GM12878 (cell line): ENCODE measurements at regions of chr1 and their contacts with region 1.

Region 1: GRCh38 chr1:89358287-89358893 is 5.5 kb upstream of the GBP6 start:
- DNase-seq: peak; percentile 27
- ATAC-seq: peak; percentile 94
- H3K4me3 ChIP-seq: no peak overlapping the region
- H3K27ac ChIP-seq: no peak overlapping the region
- H3K4me1 ChIP-seq: peaks cover 5% of the 10 kb centered on the region
- H3K27me3 ChIP-seq: no peaks in the 10 kb centered on the region
- CTCF ChIP-seq: peak; percentile 69 to 84 (median 77); a peak in 5 of 6 replicates
- EP300 ChIP-seq: no peak
- POLR2A ChIP-seq: no peak
- RAD21 ChIP-seq: peak; percentile 97

Region 2: DNA sequence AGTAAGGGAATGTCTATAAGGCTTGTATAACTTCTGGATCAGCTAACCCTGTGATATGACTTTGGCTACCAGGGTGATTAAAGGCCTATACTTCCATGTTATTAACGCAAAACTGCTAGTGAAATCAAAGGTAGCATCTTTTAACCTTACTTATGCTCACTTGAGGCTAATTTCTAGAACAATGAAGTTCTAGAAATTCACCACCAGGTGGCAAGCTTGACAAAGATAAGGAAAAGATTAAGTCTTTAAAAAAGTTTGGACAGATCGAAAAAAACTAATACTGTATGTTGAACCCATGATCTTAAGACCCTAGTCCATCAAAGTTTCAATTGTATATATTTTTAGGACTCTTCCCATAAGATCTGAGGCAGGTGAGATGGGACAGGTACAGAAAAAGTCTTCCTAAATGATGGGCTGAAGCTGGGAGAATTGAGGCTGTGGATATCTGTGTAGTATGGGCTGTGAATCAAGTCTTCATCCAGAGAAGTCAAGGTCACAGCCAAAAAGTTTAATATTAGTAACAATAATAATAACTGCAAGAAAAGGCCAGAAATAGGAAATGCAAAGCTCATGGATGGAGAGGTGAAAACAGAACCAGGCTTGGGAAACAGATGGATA is 384.8 kb before region 1 on chr1:
- CTCF ChIA-PET with region 1: interaction called, 10 read pairs
- POLR2A ChIA-PET with region 1: no interaction called
- RAD21 ChIA-PET with region 1: interaction called, 3 read pairs
- SMC1A ChIA-PET with region 1: interaction called, 6 read pairs
- in situ Hi-C with region 1: no loop called
- intact Hi-C with region 1: no loop called
- DNase-seq: no peak
- ATAC-seq: peak; percentile 74
- H3K4me3 ChIP-seq: no peak overlapping the region
- H3K27ac ChIP-seq: no peak overlapping the region
- H3K4me1 ChIP-seq: peaks cover 4% of the 10 kb centered on the region
- H3K27me3 ChIP-seq: no peaks in the 10 kb centered on the region
- CTCF ChIP-seq: peak; percentile 39 to 63 (median 52); a peak in 5 of 6 replicates
- EP300 ChIP-seq: no peak
- POLR2A ChIP-seq: no peak
- RAD21 ChIP-seq: peak; percentile 62

Region 3: DNA sequence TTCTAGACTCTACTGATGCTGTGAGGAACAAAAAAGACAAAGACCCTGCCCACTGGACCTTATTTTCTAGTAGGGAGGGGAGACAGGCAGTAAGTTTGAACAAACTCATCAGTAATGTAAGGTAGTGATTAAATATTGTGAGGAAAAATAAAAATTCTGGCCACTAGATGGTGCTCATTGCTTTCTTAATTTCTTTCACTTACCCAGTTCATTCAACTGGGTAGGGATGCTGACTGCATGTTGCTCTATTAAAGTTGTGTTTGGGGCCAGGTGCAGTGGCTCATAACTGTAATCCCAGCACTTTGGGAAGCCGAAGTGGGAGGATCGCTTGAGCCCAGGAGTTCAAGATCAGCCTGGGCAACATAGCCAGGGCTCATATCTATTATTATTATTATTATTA is 359.7 kb before region 1 on chr1:
- CTCF ChIA-PET with region 1: interaction called, 98 read pairs
- POLR2A ChIA-PET with region 1: interaction called, 3 read pairs
- RAD21 ChIA-PET with region 1: interaction called, 26 read pairs
- SMC1A ChIA-PET with region 1: interaction called, 14 read pairs
- in situ Hi-C with region 1: loop called (anchors 5 kb)
- intact Hi-C with region 1: loop called (anchors 1 kb)
- DNase-seq: no peak
- ATAC-seq: peak; percentile 98
- H3K4me3 ChIP-seq: no peak overlapping the region
- H3K27ac ChIP-seq: no peak overlapping the region
- H3K4me1 ChIP-seq: peaks cover under 1% of the 10 kb centered on the region
- H3K27me3 ChIP-seq: no peaks in the 10 kb centered on the region
- CTCF ChIP-seq: peak; percentile 24 to 64 (median 28); a peak in 4 of 6 replicates
- EP300 ChIP-seq: no peak
- POLR2A ChIP-seq: no peak
- RAD21 ChIP-seq: peak; percentile 76

Region 4: GRCh38 chr1:89198491-89199072 is 159.8 kb before region 1 on chr1 and contains the start of gene GBP4:
- CTCF ChIA-PET with region 1: interaction called, 5 read pairs
- POLR2A ChIA-PET with region 1: no interaction called
- RAD21 ChIA-PET with region 1: interaction called, 4 read pairs
- SMC1A ChIA-PET with region 1: interaction called, 12 read pairs
- in situ Hi-C with region 1: no loop called
- intact Hi-C with region 1: loop called (anchors 2 kb)
- DNase-seq: peak; percentile 69
- ATAC-seq: peak; percentile 59
- H3K4me3 ChIP-seq: peak within 1 kb of the TSS; percentile 66
- H3K27ac ChIP-seq: peak within 1 kb of the TSS; percentile 73
- H3K4me1 ChIP-seq: peaks cover 13% of the 10 kb centered on the region
- H3K27me3 ChIP-seq: no peaks in the 10 kb centered on the region
- CTCF ChIP-seq: 0 out of 6 replicates have a peak, but pooled peaks of 1 of the 3 experiments have one; percentile 8
- EP300 ChIP-seq: peak; percentile 57 to 61; a peak in 2 of 4 replicates
- POLR2A ChIP-seq: no peak
- RAD21 ChIP-seq: no peak
- polyA plus RNA-seq, gene GBP4: 2.4 to 2.5 TPM

Region 5: DNA sequence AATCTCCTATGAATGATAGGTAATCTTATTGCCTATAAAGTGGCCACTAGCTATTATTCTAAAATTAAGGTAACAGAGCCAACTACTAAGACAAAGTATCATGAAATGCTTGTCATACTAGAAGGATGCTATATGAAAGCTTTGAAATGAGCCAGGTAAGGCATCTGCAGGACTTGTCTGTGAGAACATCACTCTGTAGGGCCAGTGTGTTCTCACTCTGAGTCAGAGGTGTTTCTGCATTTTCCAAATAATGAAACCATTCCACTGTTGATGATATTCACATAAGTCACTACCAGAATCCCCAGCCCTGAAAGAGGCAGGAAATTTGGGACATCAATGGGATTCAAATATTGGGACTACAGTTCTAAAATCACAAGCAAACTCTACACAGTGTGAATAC is 59.9 kb before region 1 on chr1:
- CTCF ChIA-PET with region 1: no interaction called
- POLR2A ChIA-PET with region 1: no interaction called
- RAD21 ChIA-PET with region 1: no interaction called
- SMC1A ChIA-PET with region 1: no interaction called
- in situ Hi-C with region 1: no loop called
- intact Hi-C with region 1: loop called (anchors 5 kb)
- DNase-seq: no peak
- ATAC-seq: peak; percentile 33; the same call in 2 of the 3 replicates
- H3K4me3 ChIP-seq: no peak overlapping the region
- H3K27ac ChIP-seq: no peak overlapping the region
- H3K4me1 ChIP-seq: peaks cover 5% of the 10 kb centered on the region; the same call in 1 of the 2 replicates
- H3K27me3 ChIP-seq: no peaks in the 10 kb centered on the region
- CTCF ChIP-seq: no peak
- EP300 ChIP-seq: no peak
- POLR2A ChIP-seq: no peak
- RAD21 ChIP-seq: no peak

Region 6: DNA sequence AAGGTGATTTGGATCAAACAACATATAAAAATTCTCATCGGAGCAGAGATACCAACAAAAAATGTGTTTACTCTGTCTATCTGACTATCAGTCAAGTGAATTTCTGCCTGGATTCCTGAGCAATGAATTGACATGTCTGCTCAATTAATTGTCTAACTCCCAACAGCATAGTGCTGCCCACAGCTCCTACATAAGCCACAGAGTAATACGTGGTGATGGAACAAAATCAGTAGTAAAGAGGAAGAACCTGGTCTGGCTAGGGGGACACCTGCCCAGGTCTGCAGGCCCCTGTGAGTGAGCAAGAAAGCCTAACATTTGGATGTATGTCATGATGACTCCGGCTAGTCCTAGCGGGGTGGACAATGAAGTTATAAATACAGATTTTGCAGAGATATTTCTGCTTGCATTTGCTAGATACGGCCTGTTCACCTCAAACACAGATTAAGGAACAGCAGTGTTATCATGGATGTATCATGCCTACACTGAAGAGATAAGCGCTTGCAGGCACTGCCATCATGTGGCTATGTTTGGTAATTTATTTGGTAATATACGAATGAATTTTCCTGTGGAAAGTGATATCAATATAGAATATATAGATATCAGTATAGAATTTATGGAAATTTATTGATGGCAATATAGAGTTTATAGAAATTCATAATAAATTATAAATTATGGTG is 96.6 kb after region 1 on chr1:
- CTCF ChIA-PET with region 1: interaction called, 5 read pairs
- POLR2A ChIA-PET with region 1: no interaction called
- RAD21 ChIA-PET with region 1: interaction called, 5 read pairs
- SMC1A ChIA-PET with region 1: interaction called, 7 read pairs
- in situ Hi-C with region 1: no loop called
- intact Hi-C with region 1: loop called (anchors 1 kb)
- DNase-seq: no peak
- ATAC-seq: peak; percentile 86
- H3K4me3 ChIP-seq: no peak overlapping the region
- H3K27ac ChIP-seq: no peak overlapping the region
- H3K4me1 ChIP-seq: peaks cover 7% of the 10 kb centered on the region; the same call in 1 of the 2 replicates
- H3K27me3 ChIP-seq: no peaks in the 10 kb centered on the region
- CTCF ChIP-seq: peak; percentile 53 to 75 (median 55); a peak in 5 of 6 replicates
- EP300 ChIP-seq: no peak
- POLR2A ChIP-seq: no peak
- RAD21 ChIP-seq: peak; percentile 93